Activated CD4-positive, alpha-beta T cell treated with anti-CD3 and anti-CD28 coated beads, Interleukin-2, amount 10 ng/mL, durations not matched to agents 24 days and 14 days (primary cell): ENCODE measurements at regions of chr5 and their contacts with region 1.

Region 1: DNA sequence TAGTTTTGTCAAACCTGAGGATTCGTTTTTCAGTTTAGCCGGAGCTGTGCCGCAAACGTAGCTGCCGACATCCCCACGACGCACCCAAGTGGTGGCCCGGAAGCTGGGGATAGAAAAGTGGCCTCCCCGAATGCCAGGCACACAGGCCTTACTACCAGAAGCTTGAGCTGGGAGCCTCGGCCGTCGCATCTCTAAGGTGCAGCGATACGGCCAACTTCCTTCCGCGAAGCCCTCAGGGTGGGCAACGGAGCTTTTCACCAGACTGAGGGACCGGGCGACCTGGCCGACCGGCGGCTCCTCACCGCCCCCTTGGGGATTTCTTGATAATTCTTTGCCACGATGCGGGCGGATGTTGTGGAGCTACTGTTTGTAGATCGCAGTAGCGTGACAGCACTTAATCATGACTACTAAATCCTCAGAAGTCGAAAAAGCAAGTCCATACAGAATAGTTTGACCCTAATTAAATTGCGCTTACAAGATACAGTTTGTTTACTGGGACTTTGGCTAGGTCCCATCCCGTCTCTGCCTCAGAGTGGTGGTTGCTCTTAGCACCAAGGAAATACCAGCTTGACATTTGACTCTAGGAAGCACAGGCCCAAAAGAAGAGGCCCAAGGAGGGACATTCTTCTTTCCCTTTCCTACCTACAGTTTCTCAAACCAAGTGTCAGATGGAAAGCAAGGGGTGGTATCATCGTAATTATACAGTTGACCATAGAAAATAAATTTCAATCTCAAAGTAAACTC is 613 bp upstream of the TMEM267 start:
- DNase-seq: peak; percentile 96
- H3K4me3 Mint-ChIP-seq: peak overlapping the region; percentile 94
- H3K27ac Mint-ChIP-seq: peak overlapping the region; percentile 100
- H3K4me1 Mint-ChIP-seq: peaks cover 23% of the 10 kb centered on the region
- H3K27me3 Mint-ChIP-seq: no peaks in the 10 kb centered on the region

Region 2: GRCh38 chr5:43008369-43009153 is 475.7 kb before region 1 on chr5:
- intact Hi-C with region 1: loop called (anchors 5 kb)
- DNase-seq: peak; percentile 96
- H3K4me3 Mint-ChIP-seq: peak overlapping the region; percentile 88
- H3K27ac Mint-ChIP-seq: peak overlapping the region; percentile 95
- H3K4me1 Mint-ChIP-seq: peaks cover 36% of the 10 kb centered on the region
- H3K27me3 Mint-ChIP-seq: no peaks in the 10 kb centered on the region

Region 3: DNA sequence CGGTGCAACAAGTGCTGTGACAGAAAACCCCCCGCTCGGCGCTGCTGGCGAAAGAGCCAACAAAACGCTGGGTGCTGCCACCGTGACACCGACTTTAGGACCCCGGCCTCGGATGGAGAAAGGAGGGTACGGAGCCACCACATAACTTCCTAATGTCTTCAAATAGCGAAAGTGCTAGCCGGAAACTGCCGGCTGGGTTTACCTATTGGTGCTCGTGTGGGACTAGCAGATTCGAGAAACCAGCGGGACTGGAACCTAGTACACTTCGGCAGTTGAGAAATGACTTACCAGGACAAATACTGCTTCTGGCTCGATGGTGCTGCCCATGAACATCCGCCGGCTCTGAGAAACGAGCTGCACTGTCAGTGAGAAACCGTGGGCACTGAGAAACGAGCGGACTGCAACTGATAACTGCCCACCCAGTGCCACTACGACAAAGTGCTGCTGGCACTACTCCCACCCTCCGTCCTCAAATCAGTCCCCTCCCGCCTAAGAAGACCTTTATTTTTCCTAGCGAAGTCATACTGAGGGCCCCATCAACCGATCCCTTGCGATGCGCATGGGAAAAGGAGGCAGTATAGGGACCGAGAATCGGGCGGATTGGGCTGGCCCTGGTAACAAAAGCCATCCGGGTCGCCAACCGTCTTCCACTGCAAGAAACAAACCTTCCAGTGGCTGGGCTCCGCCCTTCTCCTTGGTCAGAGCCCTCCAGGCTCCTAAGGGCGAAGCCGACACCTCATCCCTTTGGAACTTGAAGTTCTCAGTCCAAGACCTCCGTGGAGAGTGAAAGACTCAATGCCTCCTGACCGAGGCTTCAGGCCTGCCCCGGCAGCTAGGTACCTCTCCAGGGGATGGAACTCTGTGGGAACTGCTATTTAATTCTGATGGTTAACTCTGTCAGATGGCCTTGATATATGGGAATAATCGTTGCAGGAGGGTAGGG is 417.2 kb before region 1 on chr5:
- intact Hi-C with region 1: loop called (anchors 1 kb)
- DNase-seq: peak; percentile 96
- H3K4me3 Mint-ChIP-seq: peak overlapping the region; percentile 92
- H3K27ac Mint-ChIP-seq: peak overlapping the region; percentile 100
- H3K4me1 Mint-ChIP-seq: peaks cover 32% of the 10 kb centered on the region
- H3K27me3 Mint-ChIP-seq: no peaks in the 10 kb centered on the region

Region 4: DNA sequence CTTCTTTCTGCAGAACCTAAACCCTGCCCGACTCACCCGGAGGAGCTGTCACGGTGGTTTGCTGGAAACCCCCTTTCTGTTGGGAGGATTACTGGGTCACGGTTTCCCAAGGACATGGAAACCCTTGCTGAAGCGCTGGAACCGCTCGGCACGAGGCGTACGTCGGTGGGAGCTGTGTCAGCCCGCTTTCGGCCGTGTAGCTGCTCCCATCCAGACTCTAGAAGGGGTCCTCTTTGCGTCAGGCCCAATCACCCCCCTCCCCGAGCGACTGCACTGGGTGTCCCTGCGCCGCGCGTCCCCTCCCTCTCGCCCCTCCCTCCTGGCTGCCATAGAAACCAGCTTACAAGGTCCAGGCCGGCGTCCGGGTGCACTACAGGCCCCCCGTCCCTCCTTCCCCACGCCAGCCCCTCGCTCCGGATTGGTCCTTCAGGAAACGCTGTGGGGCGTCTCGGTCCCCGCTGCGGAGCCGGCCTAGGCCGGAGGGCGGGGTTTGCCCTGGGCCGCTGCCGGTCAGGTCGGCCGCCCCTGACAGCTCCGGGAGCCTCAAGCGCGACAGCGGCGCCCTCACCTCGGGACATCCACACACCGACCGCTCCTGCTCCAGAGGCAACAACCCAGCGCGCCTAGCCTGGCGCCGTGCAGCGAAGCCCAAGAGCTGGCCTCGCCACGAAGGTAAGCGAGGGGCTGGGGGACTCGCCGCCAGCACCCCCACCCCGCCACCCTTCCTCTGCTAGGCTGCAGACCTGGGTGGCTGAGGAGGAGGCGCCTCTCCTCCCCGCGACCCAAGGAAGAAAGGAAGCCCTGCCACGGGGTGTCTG is 292.3 kb before region 1 on chr5 and contains the start of gene NIM1K:
- intact Hi-C with region 1: loop called (anchors 1 kb)
- DNase-seq: peak; percentile 85
- H3K4me3 Mint-ChIP-seq: peak within 1 kb of the TSS; percentile 86
- H3K27ac Mint-ChIP-seq: peak within 1 kb of the TSS; percentile 86
- H3K4me1 Mint-ChIP-seq: peaks cover 31% of the 10 kb centered on the region
- H3K27me3 Mint-ChIP-seq: peaks cover 15% of the 10 kb centered on the region
- total RNA-seq, gene NIM1K: 0.82 and 0.97 TPM in 2 replicates

Region 5: GRCh38 chr5:43415946-43416802 is 68.1 kb before region 1 on chr5:
- intact Hi-C with region 1: no loop called
- DNase-seq: no peak
- H3K4me3 Mint-ChIP-seq: no peak overlapping the region
- H3K27ac Mint-ChIP-seq: no peak overlapping the region
- H3K4me1 Mint-ChIP-seq: no peaks in the 10 kb centered on the region
- H3K27me3 Mint-ChIP-seq: peaks cover 4% of the 10 kb centered on the region

Region 6: DNA sequence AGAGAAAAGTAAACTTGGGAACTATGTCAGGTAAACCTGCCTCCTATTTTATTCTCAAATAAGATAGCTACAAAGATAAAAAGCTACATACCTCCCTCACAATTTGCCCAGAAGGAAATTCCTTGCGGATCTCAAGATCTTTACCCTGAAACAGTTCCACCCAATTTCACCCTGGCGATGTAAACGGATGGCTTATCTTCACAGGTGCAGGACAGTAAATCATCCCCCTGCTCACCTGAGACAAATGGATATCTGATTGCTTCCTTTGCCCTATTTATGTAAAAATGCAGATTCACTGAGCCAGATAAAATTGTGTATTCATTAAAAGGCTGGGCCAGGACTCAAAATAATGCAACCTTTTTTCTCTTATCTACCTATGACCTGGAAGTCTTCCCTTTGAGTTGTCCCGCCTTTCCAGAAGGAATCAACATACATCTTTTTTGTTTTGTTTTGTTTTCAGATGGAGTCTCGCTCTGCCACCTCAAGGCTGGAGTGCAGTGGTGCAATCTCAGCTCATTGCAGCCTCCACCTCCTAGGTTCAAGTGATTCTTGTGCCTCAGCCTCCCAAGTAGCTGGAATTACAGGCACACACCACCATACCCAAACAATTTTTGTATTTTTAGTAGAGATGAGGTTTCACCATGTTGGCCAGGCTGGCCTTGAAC is 14.4 kb before region 1 on chr5:
- intact Hi-C with region 1: no loop called
- DNase-seq: no peak
- H3K4me3 Mint-ChIP-seq: no peak overlapping the region
- H3K27ac Mint-ChIP-seq: no peak overlapping the region
- H3K4me1 Mint-ChIP-seq: peaks cover 2% of the 10 kb centered on the region
- H3K27me3 Mint-ChIP-seq: no peaks in the 10 kb centered on the region

Region 7: GRCh38 chr5:43514816-43515677 is 30.8 kb after region 1 on chr5 and contains the start of gene C5orf34:
- intact Hi-C with region 1: loop called (anchors 1 kb)
- DNase-seq: peak; percentile 98
- H3K4me3 Mint-ChIP-seq: peak within 1 kb of the TSS; percentile 95
- H3K27ac Mint-ChIP-seq: peak within 1 kb of the TSS; percentile 96
- H3K4me1 Mint-ChIP-seq: peaks cover 23% of the 10 kb centered on the region
- H3K27me3 Mint-ChIP-seq: no peaks in the 10 kb centered on the region
- total RNA-seq, gene C5orf34: 6.8 and 8.7 TPM in 2 replicates

Region 8: GRCh38 chr5:43602461-43603343 is 118.4 kb after region 1 on chr5 and contains the start of gene NNT:
- intact Hi-C with region 1: loop called (anchors 2 kb)
- DNase-seq: peak; percentile 94
- H3K4me3 Mint-ChIP-seq: peak within 1 kb of the TSS; percentile 91
- H3K27ac Mint-ChIP-seq: peak within 1 kb of the TSS; percentile 85
- H3K4me1 Mint-ChIP-seq: peaks cover 30% of the 10 kb centered on the region
- H3K27me3 Mint-ChIP-seq: no peaks in the 10 kb centered on the region
- total RNA-seq, gene NNT: 52.2 and 59.1 TPM in 2 replicates